Adrenal gland (tissue), 19 donors: ENCODE measurements at regions of chr15 and their contacts with region 1.

Region 1: DNA sequence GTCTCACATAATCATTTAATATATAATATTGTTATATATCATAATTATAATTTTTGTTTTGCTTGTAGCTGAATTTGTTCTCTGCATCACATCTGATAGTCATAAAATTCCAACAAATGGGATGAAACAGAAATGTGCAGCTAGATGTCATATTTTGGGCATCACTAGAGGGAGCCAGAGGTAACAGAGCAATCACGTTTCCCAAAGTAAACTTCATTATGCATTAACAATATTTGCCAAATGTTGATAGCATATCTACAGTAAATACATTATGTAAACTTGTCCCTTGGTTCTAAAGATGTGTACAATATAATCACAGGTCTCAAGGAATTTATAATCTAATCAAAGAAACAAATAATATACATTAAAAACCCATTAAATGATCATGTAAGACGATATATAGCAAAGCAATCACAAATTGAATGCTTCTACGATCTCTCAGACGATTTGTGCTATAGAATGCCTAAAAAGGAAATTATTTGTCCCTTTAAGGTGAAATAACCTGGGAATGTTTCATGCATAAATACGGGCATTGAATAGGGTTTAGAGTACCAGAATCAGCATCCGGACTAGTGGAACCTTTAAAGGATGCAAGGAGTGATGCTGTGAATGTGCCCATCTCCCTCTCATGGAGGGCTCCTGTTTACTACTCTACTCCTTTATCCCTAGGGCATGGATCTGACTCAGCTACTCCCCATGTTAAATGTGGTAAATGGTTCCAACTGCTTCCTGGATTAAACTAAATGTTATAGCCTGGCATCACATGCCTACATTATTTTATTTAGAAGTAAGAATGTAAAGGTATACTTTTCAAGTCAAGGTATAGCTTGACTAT is 234.1 kb upstream of the MCTP2 start:
- DNase-seq: no peak
- H3K4me3 ChIP-seq: no peak overlapping the region
- H3K27ac ChIP-seq: no peak overlapping the region
- H3K4me1 ChIP-seq: no peaks in the 10 kb centered on the region
- H3K27me3 ChIP-seq: no peaks in the 10 kb centered on the region
- CTCF ChIP-seq: peak; percentile 25 to 69 (median 53)
- POLR2A ChIP-seq: no peak

Region 2: DNA sequence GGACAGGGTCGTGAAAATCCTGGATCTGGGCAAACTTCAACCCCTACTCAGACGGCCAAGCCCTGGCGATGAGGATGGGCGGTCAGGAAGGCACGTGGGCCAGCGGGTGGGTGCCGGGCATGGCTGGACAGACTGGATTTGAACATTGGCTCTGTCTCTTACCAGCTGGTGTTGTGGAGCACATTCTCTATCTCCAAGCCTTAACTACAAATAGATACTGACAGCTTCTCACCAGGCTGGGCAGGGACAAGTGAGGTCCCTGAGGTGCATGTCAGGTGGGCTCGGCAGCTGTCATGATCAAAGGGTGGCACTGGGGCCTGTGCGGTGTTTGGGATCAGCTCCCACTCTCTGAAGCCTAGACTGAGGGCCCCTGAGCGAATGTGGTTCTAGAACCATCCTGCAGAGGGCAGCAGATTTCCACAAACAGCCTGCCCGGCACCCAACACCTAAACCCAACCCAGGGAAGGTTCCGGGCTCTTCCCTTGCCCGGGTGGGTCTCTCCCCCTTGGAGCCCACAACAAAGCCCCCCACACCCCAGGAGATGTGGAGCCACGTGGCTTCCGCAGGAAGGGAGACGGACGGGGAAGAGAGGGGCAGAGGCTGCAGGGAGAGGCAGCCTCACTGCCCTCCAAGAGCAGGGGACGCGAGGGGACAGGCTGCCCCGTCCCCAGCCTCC is 966.7 kb before region 1 on chr15:
- intact Hi-C with region 1: loop called in 1 of 2 experiments (anchors 10 kb)
- DNase-seq: peak; percentile 68 to 90 (median 79)
- H3K4me3 ChIP-seq: no peak overlapping the region
- H3K27ac ChIP-seq: peak overlapping the region in 3 of 5 donors; percentile 74 to 96 (median 85)
- H3K4me1 ChIP-seq: peaks cover 24 to 40% of the 10 kb centered on the region in 2 donors
- H3K27me3 ChIP-seq: no peaks in the 10 kb centered on the region
- CTCF ChIP-seq: peak; percentile 69 to 90 (median 83)
- POLR2A ChIP-seq: no peak